ENCODE measurements at regions of chr6 and their contacts with region 1.

Region 1: GRCh38 chr6:28940858-28941680 is 17.3 kb upstream of the TRIM27 start:
- DNase-seq: peak; percentile 93
- ATAC-seq: peak; percentile 82
- H3K4me3 ChIP-seq: peak overlapping the region; percentile 77
- H3K27ac ChIP-seq: peak overlapping the region; percentile 82
- H3K4me1 ChIP-seq: no peaks in the 10 kb centered on the region; the same call in 1 of the 2 replicates
- H3K27me3 ChIP-seq: no peaks in the 10 kb centered on the region
- CTCF ChIP-seq: no peak; a peak in 1 of 6 replicates
- EP300 ChIP-seq: peak in 1 of 2 experiments; percentile 86; a peak in 1 of 4 replicates
- POLR2A ChIP-seq: no peak
- RAD21 ChIP-seq: no peak

Region 2: GRCh38 chr6:28399350-28400121 is 541.5 kb before region 1 on chr6 and contains the start of gene ZSCAN12:
- CTCF ChIA-PET with region 1: no interaction called
- POLR2A ChIA-PET with region 1: no interaction called
- RAD21 ChIA-PET with region 1: no interaction called
- SMC1A ChIA-PET with region 1: no interaction called
- in situ Hi-C with region 1: no loop called
- intact Hi-C with region 1: loop called (anchors 10 kb)
- DNase-seq: peak; percentile 61
- ATAC-seq: peak; percentile 86
- H3K4me3 ChIP-seq: peak within 1 kb of the TSS; percentile 80
- H3K27ac ChIP-seq: peak within 1 kb of the TSS; percentile 97
- H3K4me1 ChIP-seq: peaks cover 4% of the 10 kb centered on the region
- H3K27me3 ChIP-seq: no peaks in the 10 kb centered on the region
- CTCF ChIP-seq: peak; percentile 50 to 59 (median 54)
- EP300 ChIP-seq: peak in 1 of 2 experiments; percentile 39; a peak in 1 of 4 replicates
- POLR2A ChIP-seq: peak; percentile 87
- RAD21 ChIP-seq: peak; percentile 25; the same call in 1 of the 2 replicates
- polyA plus RNA-seq, gene ZSCAN12: 1.2 to 1.6 TPM

Region 3: DNA sequence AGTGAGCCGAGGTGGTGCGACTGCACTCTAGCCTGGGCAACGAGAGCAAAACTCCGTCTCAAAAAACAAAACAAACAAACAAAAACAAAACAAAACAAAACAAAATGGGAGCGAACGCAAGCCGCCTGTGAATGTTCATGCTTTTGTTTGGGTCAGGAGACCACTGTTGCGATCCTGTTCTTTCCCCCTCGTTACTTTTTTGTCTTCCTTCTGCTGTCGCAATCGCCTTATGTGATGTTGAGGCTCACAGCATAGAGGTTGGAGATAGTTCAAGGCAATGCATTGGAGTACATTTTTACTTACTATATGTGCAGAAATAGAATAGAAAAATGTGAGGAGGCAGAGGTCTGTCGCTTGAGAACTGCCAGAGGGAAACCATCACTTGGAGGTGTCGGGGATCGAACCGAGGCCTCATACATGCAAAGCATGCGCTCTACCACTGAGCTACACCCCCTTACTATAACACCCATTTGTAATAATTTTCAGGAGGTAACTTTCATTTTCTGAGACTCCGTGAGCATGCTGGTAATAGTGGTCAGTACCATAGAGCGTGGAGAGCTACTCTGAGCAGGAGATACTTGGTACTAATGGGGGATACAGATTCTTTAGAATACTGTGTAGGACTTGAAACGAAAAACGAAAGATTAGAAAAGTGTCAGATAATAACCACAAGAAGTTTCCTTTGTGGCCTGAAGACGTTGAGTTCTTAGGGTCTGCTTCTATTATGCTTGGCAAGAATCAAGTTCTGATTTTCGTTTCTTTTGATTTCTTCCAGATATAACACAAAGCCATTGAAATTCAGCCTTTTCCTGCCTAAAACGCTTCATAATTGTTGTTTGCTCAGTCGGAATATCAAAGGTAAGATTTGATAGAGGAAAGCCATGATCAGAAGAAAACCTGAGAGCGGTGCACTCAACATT is 138.4 kb before region 1 on chr6:
- CTCF ChIA-PET with region 1: no interaction called
- POLR2A ChIA-PET with region 1: no interaction called
- RAD21 ChIA-PET with region 1: no interaction called
- SMC1A ChIA-PET with region 1: no interaction called
- in situ Hi-C with region 1: no loop called
- intact Hi-C with region 1: loop called (anchors 5 kb)
- DNase-seq: no peak
- ATAC-seq: peak; percentile 91
- H3K4me3 ChIP-seq: no peak overlapping the region
- H3K27ac ChIP-seq: no peak overlapping the region
- H3K4me1 ChIP-seq: no peaks in the 10 kb centered on the region
- H3K27me3 ChIP-seq: no peaks in the 10 kb centered on the region
- CTCF ChIP-seq: no peak
- EP300 ChIP-seq: no peak
- POLR2A ChIP-seq: no peak
- RAD21 ChIP-seq: no peak

Region 4: DNA sequence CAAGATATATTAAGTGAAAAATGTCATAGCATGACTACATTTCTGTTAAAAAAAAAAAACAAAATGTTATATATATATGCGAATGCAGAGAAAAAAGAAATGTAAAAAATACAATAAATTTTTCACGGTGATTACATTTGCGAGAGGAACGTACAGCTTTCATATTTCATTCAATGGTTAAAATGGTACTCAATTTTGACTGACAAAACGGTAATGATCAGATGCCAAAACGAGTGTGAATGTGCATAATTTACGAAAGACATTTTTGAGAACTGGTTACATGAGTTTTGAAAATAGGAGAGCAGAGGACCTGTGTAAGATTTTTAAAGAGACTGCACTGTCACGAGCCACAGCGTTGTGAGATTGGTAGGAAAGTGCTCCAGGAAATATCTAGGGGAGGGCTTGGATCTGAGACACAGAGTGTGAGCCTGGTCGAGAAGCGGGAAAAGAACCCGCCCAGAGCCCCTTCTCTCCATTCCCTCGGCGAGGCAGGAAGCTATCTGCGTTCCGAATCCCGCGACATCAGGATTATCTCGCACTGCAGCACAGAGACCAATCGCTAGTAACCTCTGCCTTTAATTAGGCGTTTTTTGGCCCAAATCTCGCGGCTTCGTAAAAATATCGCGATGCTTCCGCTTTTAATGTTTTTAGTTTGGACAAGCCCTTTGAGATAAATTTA is 45.8 kb before region 1 on chr6:
- CTCF ChIA-PET with region 1: interaction called, 5 read pairs
- POLR2A ChIA-PET with region 1: interaction called, 8 read pairs
- RAD21 ChIA-PET with region 1: no interaction called
- SMC1A ChIA-PET with region 1: interaction called, 3 read pairs
- in situ Hi-C with region 1: no loop called
- intact Hi-C with region 1: loop called (anchors 1 kb)
- DNase-seq: peak; percentile 96
- ATAC-seq: peak; percentile 88
- H3K4me3 ChIP-seq: peak overlapping the region; percentile 87
- H3K27ac ChIP-seq: peak overlapping the region; percentile 89
- H3K4me1 ChIP-seq: no peaks in the 10 kb centered on the region
- H3K27me3 ChIP-seq: no peaks in the 10 kb centered on the region
- CTCF ChIP-seq: no peak
- EP300 ChIP-seq: no peak
- POLR2A ChIP-seq: peak; percentile 87
- RAD21 ChIP-seq: no peak

Region 5: GRCh38 chr6:28969129-28969528 is 28.1 kb after region 1 on chr6:
- CTCF ChIA-PET with region 1: no interaction called
- POLR2A ChIA-PET with region 1: no interaction called
- RAD21 ChIA-PET with region 1: no interaction called
- SMC1A ChIA-PET with region 1: no interaction called
- in situ Hi-C with region 1: no loop called
- intact Hi-C with region 1: no loop called
- DNase-seq: no peak
- ATAC-seq: no peak
- H3K4me3 ChIP-seq: no peak overlapping the region
- H3K27ac ChIP-seq: no peak overlapping the region
- H3K4me1 ChIP-seq: no peaks in the 10 kb centered on the region
- H3K27me3 ChIP-seq: no peaks in the 10 kb centered on the region
- CTCF ChIP-seq: no peak
- EP300 ChIP-seq: no peak
- POLR2A ChIP-seq: no peak
- RAD21 ChIP-seq: no peak

Region 6: DNA sequence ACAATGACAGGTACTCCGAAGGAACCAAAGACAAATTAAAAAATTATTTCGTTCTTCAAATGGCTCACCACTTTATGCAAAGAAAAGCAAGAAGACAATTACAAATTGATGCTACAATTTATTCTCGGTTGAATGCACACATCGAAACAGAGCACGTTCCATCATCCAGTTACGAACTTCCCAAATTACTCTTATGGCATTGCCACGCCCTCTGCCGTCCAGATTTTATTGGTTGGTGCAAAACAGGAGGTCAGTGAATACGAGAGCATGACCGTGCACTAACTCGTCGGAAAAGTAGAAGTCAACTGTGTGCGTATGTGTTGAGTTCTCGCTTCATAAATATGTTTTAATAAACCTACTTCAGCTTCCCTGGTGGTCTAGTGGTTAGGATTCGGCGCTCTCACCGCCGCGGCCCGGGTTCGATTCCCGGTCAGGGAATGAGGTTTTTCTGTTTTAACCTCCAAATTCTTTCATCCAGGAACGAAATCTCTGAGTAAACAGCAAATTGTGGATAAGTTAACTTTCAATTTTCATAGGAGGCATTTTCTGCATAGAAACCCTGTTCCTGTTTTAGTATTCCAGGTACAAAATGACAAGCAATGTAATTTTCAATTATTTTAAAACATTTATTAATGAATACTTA is 40.9 kb after region 1 on chr6:
- CTCF ChIA-PET with region 1: interaction called, 4 read pairs
- POLR2A ChIA-PET with region 1: interaction called, 8 read pairs
- RAD21 ChIA-PET with region 1: no interaction called
- SMC1A ChIA-PET with region 1: interaction called, 5 read pairs
- in situ Hi-C with region 1: loop called (anchors 5 kb)
- intact Hi-C with region 1: loop called (anchors 1 kb)
- DNase-seq: peak; percentile 79
- ATAC-seq: peak; percentile 77
- H3K4me3 ChIP-seq: peak overlapping the region; percentile 100
- H3K27ac ChIP-seq: no peak overlapping the region
- H3K4me1 ChIP-seq: peaks cover 6% of the 10 kb centered on the region; the same call in 1 of the 2 replicates
- H3K27me3 ChIP-seq: no peaks in the 10 kb centered on the region
- CTCF ChIP-seq: no peak; a peak in 1 of 6 replicates
- EP300 ChIP-seq: peak in 1 of 2 experiments; percentile 80; a peak in 1 of 4 replicates
- POLR2A ChIP-seq: no peak
- RAD21 ChIP-seq: no peak

Region 7: DNA sequence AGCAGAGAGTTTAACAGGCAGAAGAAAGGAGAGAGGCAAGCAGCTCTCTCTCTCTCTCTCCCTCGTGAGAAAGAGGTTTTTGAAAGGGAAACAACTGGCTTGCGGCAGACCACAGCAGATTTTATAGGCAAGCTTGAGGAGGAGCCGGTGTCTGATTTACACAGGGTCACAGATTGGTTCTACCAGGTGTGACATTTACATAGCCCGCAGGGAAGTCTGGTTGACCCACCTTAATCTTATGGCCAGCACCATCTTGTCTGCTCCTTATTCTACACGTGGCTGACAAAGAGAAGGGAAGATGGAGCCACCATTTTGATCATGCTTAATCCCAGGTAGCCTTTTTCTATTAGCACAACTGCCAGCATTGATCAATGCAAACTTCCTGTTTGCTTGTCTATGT is 295.0 kb after region 1 on chr6:
- CTCF ChIA-PET with region 1: no interaction called
- POLR2A ChIA-PET with region 1: no interaction called
- RAD21 ChIA-PET with region 1: no interaction called
- SMC1A ChIA-PET with region 1: no interaction called
- in situ Hi-C with region 1: no loop called
- intact Hi-C with region 1: no loop called
- DNase-seq: no peak
- ATAC-seq: no peak
- H3K4me3 ChIP-seq: no peak overlapping the region
- H3K27ac ChIP-seq: no peak overlapping the region
- H3K4me1 ChIP-seq: no peaks in the 10 kb centered on the region
- H3K27me3 ChIP-seq: peaks cover 0 to 4% of the 10 kb centered on the region in 2 experiments; a peak in 1 of 4 replicates
- CTCF ChIP-seq: no peak
- EP300 ChIP-seq: no peak
- POLR2A ChIP-seq: no peak
- RAD21 ChIP-seq: no peak